HepG2 (cell line): ENCODE measurements at regions of chr14 and their contacts with region 1.

Region 1: DNA sequence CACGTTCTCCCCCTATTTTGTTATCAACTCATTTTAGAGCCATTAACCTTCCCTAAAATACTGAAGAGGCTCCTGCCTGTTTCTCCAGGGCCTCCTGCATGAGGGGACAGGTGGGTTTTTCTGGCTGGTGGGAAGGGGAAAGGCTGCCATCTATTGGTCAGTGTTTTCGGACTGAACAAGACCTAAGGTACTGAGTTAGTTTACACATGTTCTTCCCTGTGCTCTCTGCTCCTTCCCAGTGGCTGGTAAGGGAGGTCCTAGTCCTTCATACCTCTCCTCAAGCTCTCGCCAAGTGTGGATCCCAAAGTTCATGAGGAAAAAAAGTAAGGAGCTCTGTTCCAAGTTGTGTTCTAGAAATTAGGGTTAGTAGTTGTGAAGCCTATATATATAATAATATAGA is 357.5 kb downstream of the FSCB start:
- DNase-seq: peak; percentile 55
- ATAC-seq: peak; percentile 97
- H3K4me3 ChIP-seq: no peak overlapping the region
- H3K27ac ChIP-seq: no peak overlapping the region
- H3K4me1 ChIP-seq: no peaks in the 10 kb centered on the region
- H3K27me3 ChIP-seq: no peaks in the 10 kb centered on the region
- CTCF ChIP-seq: peak; percentile 82
- EP300 ChIP-seq: no peak
- POLR2A ChIP-seq: no peak
- RAD21 ChIP-seq: peak; percentile 40; the same call in 1 of the 2 replicates

Region 2: DNA sequence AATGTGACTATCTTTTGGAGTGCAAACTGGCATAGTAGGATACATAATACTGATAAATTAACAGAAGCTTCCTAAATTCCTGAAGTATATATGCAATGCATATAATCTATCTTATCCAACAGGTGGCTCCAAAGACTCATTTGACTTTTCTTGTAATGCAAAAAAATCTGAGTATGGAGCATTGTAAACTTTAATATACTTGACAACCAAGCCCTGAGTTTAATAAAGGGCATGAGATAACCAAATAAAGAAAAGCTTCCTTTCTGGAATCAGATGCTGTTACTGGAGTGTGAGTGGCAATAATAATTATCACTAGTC is 646.0 kb before region 1 on chr14:
- CTCF ChIA-PET with region 1: no interaction called
- POLR2A ChIA-PET with region 1: no interaction called
- in situ Hi-C with region 1: no loop called
- intact Hi-C with region 1: loop called (anchors 1 kb)
- DNase-seq: peak; percentile 17
- ATAC-seq: no peak
- H3K4me3 ChIP-seq: no peak overlapping the region
- H3K27ac ChIP-seq: no peak overlapping the region
- H3K4me1 ChIP-seq: no peaks in the 10 kb centered on the region
- H3K27me3 ChIP-seq: no peaks in the 10 kb centered on the region
- CTCF ChIP-seq: peak; percentile 39
- EP300 ChIP-seq: no peak
- POLR2A ChIP-seq: no peak
- RAD21 ChIP-seq: no peak; the same call in 1 of the 2 replicates

Region 3: DNA sequence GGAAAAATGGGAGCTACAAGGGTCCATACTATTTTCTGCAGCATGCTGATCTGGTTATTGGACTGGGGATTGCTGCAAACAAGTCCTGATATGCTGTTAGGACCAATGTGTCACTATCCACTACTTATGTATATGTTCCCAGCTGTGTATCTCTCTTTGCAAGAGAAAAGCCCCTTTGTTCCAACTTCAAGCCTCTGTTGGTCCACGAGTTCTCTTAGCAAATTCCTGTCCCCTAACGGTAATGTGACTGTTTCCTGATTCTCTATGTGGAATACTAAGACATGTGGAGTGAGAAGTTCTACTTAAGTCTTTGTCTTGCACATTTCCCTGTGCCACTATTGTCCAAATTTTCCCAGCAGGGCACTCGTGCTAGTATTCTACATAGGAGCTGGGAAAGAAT is 200.2 kb before region 1 on chr14:
- CTCF ChIA-PET with region 1: no interaction called
- POLR2A ChIA-PET with region 1: no interaction called
- in situ Hi-C with region 1: no loop called
- intact Hi-C with region 1: no loop called
- DNase-seq: no peak
- ATAC-seq: no peak
- H3K4me3 ChIP-seq: no peak overlapping the region
- H3K27ac ChIP-seq: no peak overlapping the region
- H3K4me1 ChIP-seq: no peaks in the 10 kb centered on the region
- H3K27me3 ChIP-seq: no peaks in the 10 kb centered on the region
- CTCF ChIP-seq: no peak
- EP300 ChIP-seq: no peak
- POLR2A ChIP-seq: no peak
- RAD21 ChIP-seq: no peak

Region 4: GRCh38 chr14:44113769-44114730 is 35.5 kb before region 1 on chr14:
- CTCF ChIA-PET with region 1: no interaction called
- POLR2A ChIA-PET with region 1: no interaction called
- in situ Hi-C with region 1: no loop called
- intact Hi-C with region 1: no loop called
- DNase-seq: no peak
- ATAC-seq: no peak
- H3K4me3 ChIP-seq: no peak overlapping the region
- H3K27ac ChIP-seq: no peak overlapping the region
- H3K4me1 ChIP-seq: no peaks in the 10 kb centered on the region
- H3K27me3 ChIP-seq: no peaks in the 10 kb centered on the region; a peak in 1 of 5 replicates
- CTCF ChIP-seq: no peak
- EP300 ChIP-seq: no peak
- POLR2A ChIP-seq: no peak
- RAD21 ChIP-seq: no peak

Region 5: DNA sequence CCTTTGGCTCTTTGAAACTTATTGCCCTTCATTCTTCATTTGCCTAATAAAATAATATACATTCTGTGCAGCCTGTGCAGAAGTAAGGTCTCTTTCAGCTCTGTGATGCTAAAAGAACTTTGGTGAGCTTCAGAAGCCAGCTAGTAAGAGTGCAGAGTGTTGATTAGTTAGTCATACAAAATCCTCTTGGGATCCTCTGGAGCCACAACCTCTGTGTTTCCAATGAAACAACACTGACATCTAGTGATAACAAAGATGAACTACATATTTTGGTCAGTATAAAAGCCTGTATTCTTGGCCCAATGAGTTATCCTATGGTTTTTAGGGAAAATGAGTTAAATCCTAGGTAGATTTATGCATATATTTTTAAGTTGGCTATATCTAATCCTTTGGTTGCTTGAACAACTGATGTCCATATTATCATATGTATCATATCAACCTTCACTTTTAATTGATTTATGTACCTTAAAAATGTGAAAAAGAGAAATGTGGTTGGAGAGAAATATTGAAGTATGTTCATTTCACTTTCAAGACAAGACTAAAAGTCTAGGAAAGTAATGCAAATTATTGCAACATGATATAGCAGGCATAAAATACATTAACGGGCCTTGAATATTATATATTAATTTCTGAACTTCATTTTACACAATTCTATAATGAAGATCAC is 653.8 kb after region 1 on chr14:
- CTCF ChIA-PET with region 1: no interaction called
- POLR2A ChIA-PET with region 1: no interaction called
- in situ Hi-C with region 1: no loop called
- intact Hi-C with region 1: loop called (anchors 5 kb)
- DNase-seq: peak; percentile 35
- ATAC-seq: peak; percentile 92
- H3K4me3 ChIP-seq: no peak overlapping the region
- H3K27ac ChIP-seq: no peak overlapping the region
- H3K4me1 ChIP-seq: no peaks in the 10 kb centered on the region
- H3K27me3 ChIP-seq: no peaks in the 10 kb centered on the region
- CTCF ChIP-seq: peak; percentile 76
- EP300 ChIP-seq: no peak
- POLR2A ChIP-seq: no peak
- RAD21 ChIP-seq: peak; percentile 31; the same call in 1 of the 2 replicates